ENCODE measurements at regions of chr10 and their contacts with region 1.

Region 1: GRCh38 chr10:68727146-68727545 is 6.1 kb downstream of the CCAR1 start:
- DNase-seq: no peak
- ATAC-seq: no peak
- H3K4me3 ChIP-seq: no peak overlapping the region
- H3K4me3 Mint-ChIP-seq: no peak overlapping the region
- H3K27ac ChIP-seq: no peak overlapping the region
- H3K27ac Mint-ChIP-seq: no peak overlapping the region
- H3K4me1 ChIP-seq: peaks cover 6% of the 10 kb centered on the region in 2 donors
- H3K4me1 Mint-ChIP-seq: peaks cover 11% of the 10 kb centered on the region
- H3K27me3 ChIP-seq: no peaks in the 10 kb centered on the region
- H3K27me3 Mint-ChIP-seq: no peaks in the 10 kb centered on the region
- CTCF ChIP-seq: no peak

Region 2: DNA sequence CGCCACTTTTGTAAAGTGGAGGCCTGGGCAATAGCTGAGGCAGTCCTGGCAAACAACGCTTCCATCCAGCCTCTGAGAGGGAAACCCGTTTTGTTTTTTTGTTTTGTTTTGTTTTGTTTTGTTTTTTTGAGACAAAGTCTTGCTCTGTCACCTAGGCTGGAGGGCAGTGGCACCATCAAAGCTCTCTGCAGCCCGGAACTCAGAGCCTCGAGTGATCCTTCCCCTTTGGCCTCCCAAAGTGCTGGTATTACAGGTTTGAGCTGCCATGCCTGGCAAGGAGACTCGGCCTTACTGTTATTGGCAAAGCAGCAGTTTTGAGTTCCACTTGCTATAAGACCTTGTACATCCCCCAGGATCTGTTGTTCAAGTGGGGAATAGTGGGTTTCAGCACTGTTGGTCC is 189.3 kb before region 1 on chr10:
- CTCF ChIA-PET with region 1: no interaction called
- POLR2A ChIA-PET with region 1: interaction called, 13 read pairs
- intact Hi-C with region 1: no loop called
- DNase-seq: no peak
- ATAC-seq: no peak
- H3K4me3 ChIP-seq: no peak overlapping the region
- H3K4me3 Mint-ChIP-seq: no peak overlapping the region
- H3K27ac ChIP-seq: no peak overlapping the region
- H3K27ac Mint-ChIP-seq: no peak overlapping the region
- H3K4me1 ChIP-seq: no peaks in the 10 kb centered on the region
- H3K4me1 Mint-ChIP-seq: no peaks in the 10 kb centered on the region
- H3K27me3 ChIP-seq: no peaks in the 10 kb centered on the region
- H3K27me3 Mint-ChIP-seq: no peaks in the 10 kb centered on the region
- CTCF ChIP-seq: no peak

Region 3: GRCh38 chr10:68647672-68648341 is 79.3 kb before region 1 on chr10:
- CTCF ChIA-PET with region 1: no interaction called
- POLR2A ChIA-PET with region 1: no interaction called
- intact Hi-C with region 1: no loop called
- DNase-seq: no peak
- ATAC-seq: no peak
- H3K4me3 ChIP-seq: no peak overlapping the region
- H3K4me3 Mint-ChIP-seq: no peak overlapping the region
- H3K27ac ChIP-seq: no peak overlapping the region
- H3K27ac Mint-ChIP-seq: no peak overlapping the region
- H3K4me1 ChIP-seq: no peaks in the 10 kb centered on the region
- H3K4me1 Mint-ChIP-seq: no peaks in the 10 kb centered on the region
- H3K27me3 ChIP-seq: no peaks in the 10 kb centered on the region
- H3K27me3 Mint-ChIP-seq: no peaks in the 10 kb centered on the region
- CTCF ChIP-seq: no peak

Region 4: DNA sequence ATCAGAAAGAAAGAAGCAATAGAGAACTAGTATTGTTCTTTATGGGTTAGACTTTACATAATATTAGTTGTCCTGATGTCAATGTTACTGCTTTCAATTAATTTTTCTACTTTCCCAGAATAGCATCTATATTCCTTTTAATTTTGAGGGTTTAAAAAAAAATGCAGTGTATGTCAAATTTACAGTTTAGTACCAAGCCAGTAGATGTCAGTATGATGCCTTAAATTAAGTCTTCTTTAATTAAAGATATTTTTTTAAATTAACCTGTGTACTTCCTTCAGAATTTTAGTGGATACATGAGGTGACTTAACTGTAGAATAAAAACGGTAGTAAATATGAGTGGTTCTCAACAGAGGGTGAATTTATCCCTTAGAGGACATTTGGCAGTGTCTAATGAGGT is 65.0 kb after region 1 on chr10:
- CTCF ChIA-PET with region 1: no interaction called
- POLR2A ChIA-PET with region 1: no interaction called
- intact Hi-C with region 1: no loop called
- DNase-seq: no peak
- ATAC-seq: no peak
- H3K4me3 ChIP-seq: no peak overlapping the region
- H3K4me3 Mint-ChIP-seq: no peak overlapping the region
- H3K27ac ChIP-seq: no peak overlapping the region
- H3K27ac Mint-ChIP-seq: no peak overlapping the region
- H3K4me1 ChIP-seq: no peaks in the 10 kb centered on the region
- H3K4me1 Mint-ChIP-seq: no peaks in the 10 kb centered on the region
- H3K27me3 ChIP-seq: no peaks in the 10 kb centered on the region
- H3K27me3 Mint-ChIP-seq: no peaks in the 10 kb centered on the region
- CTCF ChIP-seq: no peak

Region 5: DNA sequence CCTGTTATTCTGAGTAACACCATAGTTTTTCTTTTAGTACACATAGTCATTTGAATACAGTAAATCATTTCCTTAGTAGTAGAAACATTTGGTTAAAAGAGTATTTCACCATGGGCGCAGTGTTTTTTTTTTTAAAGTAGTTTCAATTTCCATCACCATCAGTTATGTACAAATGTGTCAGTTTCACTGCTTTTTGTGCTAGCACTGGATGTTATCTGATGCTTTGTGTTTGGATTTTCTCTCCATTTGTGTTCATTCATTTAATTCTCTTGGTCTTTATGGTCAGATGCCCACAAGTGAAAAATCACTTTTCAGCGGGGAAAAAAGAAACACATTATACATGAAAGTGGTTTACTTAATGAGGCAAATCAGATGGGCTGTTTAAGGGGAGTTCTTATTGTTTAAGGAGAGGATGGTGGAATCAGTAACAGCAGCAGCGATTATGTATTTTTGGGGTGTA is 535.2 kb after region 1 on chr10:
- CTCF ChIA-PET with region 1: no interaction called
- POLR2A ChIA-PET with region 1: no interaction called
- intact Hi-C with region 1: no loop called
- DNase-seq: no peak
- ATAC-seq: no peak
- H3K4me3 ChIP-seq: no peak overlapping the region
- H3K4me3 Mint-ChIP-seq: no peak overlapping the region
- H3K27ac ChIP-seq: no peak overlapping the region
- H3K27ac Mint-ChIP-seq: no peak overlapping the region
- H3K4me1 ChIP-seq: no peaks in the 10 kb centered on the region
- H3K4me1 Mint-ChIP-seq: peaks cover 3% of the 10 kb centered on the region
- H3K27me3 ChIP-seq: no peaks in the 10 kb centered on the region
- H3K27me3 Mint-ChIP-seq: peaks cover 7% of the 10 kb centered on the region
- CTCF ChIP-seq: no peak